Activated CD4-positive, alpha-beta T cell treated with anti-CD3 and anti-CD28 coated beads for 36 hours (primary cell): ENCODE measurements at regions of chr9 and their contacts with region 1.

Region 1: GRCh38 chr9:114611516-114612271 is 603 bp downstream of the TMEM268 start:
- DNase-seq: peak; percentile 66
- ATAC-seq: peak; percentile 66
- H3K4me3 Mint-ChIP-seq: peak overlapping the region; percentile 77
- H3K27ac Mint-ChIP-seq: peak overlapping the region; percentile 79
- H3K4me1 Mint-ChIP-seq: peaks cover 50% of the 10 kb centered on the region
- H3K27me3 Mint-ChIP-seq: no peaks in the 10 kb centered on the region

Region 2: GRCh38 chr9:114330636-114331035 is 281.1 kb before region 1 on chr9:
- CTCF ChIA-PET with region 1: no interaction called
- POLR2A ChIA-PET with region 1: no interaction called
- intact Hi-C with region 1: no loop called
- DNase-seq: no peak
- ATAC-seq: no peak
- H3K4me3 Mint-ChIP-seq: no peak overlapping the region
- H3K27ac Mint-ChIP-seq: no peak overlapping the region
- H3K4me1 Mint-ChIP-seq: peaks cover 8% of the 10 kb centered on the region
- H3K27me3 Mint-ChIP-seq: no peaks in the 10 kb centered on the region

Region 3: DNA sequence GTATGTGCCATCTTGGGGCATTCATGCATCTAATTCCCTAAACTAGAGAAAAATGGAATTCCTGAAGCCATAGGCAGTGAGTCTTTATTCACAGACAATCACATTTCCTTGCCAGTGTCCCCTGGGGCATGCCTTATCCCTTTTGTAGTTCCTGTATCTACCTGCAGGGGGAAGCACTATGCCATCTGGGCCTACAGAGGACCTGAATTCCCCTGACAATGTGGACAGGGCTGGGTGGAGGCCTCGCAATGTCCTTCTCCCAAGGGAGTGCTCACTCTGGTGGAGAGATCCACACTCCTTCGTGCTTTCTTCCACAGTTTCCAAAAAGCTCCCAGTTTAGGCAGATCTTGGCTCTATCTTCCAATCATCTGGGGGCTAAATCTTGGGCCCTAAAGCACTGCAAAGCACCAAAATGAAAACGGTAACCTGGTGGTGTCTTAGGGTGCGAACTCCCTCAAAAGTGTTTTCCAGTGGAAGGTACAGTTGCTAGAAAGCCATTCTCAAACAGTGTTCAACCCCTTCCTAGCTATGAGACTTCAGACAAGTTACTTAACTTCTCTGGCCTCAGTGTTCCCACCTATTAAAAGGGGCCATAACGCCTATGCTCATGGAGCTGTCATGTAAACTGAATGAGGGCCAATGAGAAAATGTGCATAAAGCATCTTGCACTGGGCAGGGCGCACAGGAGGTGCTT is 123.9 kb before region 1 on chr9:
- CTCF ChIA-PET with region 1: interaction called, 4 read pairs
- POLR2A ChIA-PET with region 1: no interaction called
- intact Hi-C with region 1: loop called in 1 of 2 experiments (anchors 10 kb)
- DNase-seq: peak; percentile 72
- ATAC-seq: peak; percentile 63
- H3K4me3 Mint-ChIP-seq: no peak overlapping the region
- H3K27ac Mint-ChIP-seq: no peak overlapping the region
- H3K4me1 Mint-ChIP-seq: peaks cover 25% of the 10 kb centered on the region
- H3K27me3 Mint-ChIP-seq: no peaks in the 10 kb centered on the region

Region 4: GRCh38 chr9:114587385-114588202 is 24.1 kb before region 1 on chr9 and contains the start of gene ATP6V1G1:
- CTCF ChIA-PET with region 1: interaction called, 16 read pairs
- POLR2A ChIA-PET with region 1: interaction called, 7 read pairs
- intact Hi-C with region 1: loop called (anchors 1 to 2 kb)
- DNase-seq: peak; percentile 100
- ATAC-seq: peak; percentile 96
- H3K4me3 Mint-ChIP-seq: peak within 1 kb of the TSS; percentile 99
- H3K27ac Mint-ChIP-seq: peak within 1 kb of the TSS; percentile 100
- H3K4me1 Mint-ChIP-seq: peaks cover 44% of the 10 kb centered on the region
- H3K27me3 Mint-ChIP-seq: no peaks in the 10 kb centered on the region
- total RNA-seq, gene ATP6V1G1: 33.8 to 37.7 TPM

Region 5: GRCh38 chr9:114621975-114622609 is 10.4 kb after region 1 on chr9:
- CTCF ChIA-PET with region 1: no interaction called
- POLR2A ChIA-PET with region 1: no interaction called
- intact Hi-C with region 1: no loop called
- DNase-seq: no peak
- ATAC-seq: no peak
- H3K4me3 Mint-ChIP-seq: no peak overlapping the region
- H3K27ac Mint-ChIP-seq: no peak overlapping the region
- H3K4me1 Mint-ChIP-seq: peaks cover 14% of the 10 kb centered on the region
- H3K27me3 Mint-ChIP-seq: no peaks in the 10 kb centered on the region

Region 6: GRCh38 chr9:114798785-114799427 is 187.2 kb after region 1 on chr9:
- CTCF ChIA-PET with region 1: no interaction called
- POLR2A ChIA-PET with region 1: no interaction called
- intact Hi-C with region 1: no loop called
- DNase-seq: no peak
- ATAC-seq: no peak
- H3K4me3 Mint-ChIP-seq: no peak overlapping the region
- H3K27ac Mint-ChIP-seq: no peak overlapping the region
- H3K4me1 Mint-ChIP-seq: no peaks in the 10 kb centered on the region
- H3K27me3 Mint-ChIP-seq: no peaks in the 10 kb centered on the region